ENCODE measurements at regions of chr17 and their contacts with region 1.

Region 1: DNA sequence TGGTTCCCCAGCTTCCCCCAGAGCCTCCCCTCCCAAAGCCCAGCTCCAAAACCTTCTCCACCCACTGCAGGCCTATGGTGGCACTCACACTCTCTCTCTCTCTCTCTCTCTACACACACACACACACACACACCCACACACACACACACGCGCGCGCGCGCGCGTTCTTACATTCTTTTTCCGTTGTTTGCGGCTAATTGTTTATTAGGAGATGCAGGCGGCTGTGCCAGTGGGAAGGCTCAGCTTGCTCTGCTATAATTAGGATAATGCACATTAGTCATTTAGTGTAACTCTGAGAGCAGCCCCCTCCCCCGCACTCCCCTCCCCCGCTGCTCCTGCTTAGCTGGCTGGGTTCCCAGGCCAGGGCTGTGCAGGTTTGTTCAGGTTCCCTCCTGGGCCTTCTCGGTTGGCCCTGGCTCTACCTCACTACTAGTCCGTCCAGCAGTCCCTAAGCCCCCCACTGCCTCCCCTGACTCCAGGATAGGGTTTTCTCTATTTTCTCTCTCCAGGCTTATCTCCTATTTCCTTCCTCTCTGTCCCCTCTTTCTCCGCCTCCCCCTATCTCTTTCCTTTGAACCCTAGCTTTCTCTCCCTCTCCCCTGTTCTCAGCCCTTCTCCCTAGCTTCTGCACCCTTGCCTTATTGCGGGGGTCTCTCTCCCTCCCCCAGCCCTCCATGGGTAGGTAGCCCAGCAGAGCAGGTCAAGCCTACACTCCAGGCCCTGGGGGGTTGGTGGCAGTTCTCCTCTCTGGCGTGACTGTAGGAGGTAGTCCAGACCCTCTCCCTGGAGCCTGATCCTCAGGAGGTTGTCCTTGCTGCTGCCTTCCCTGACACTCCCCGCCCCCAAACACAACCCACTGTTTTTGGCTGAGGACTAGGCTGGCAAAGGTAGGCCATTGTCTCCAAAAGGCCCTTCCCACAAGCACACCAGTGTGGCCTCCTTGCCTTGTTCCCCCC is 34.0 kb downstream of the TMEM132E start:
- DNase-seq: no peak
- ATAC-seq: no peak
- H3K4me3 ChIP-seq: no peak overlapping the region
- H3K27ac ChIP-seq: no peak overlapping the region
- H3K4me1 ChIP-seq: no peaks in the 10 kb centered on the region
- H3K27me3 ChIP-seq: peaks cover 0 to 42% (median 9%) of the 10 kb centered on the region in 3 donors
- CTCF ChIP-seq: no peak
- POLR2A ChIP-seq: no peak

Region 2: DNA sequence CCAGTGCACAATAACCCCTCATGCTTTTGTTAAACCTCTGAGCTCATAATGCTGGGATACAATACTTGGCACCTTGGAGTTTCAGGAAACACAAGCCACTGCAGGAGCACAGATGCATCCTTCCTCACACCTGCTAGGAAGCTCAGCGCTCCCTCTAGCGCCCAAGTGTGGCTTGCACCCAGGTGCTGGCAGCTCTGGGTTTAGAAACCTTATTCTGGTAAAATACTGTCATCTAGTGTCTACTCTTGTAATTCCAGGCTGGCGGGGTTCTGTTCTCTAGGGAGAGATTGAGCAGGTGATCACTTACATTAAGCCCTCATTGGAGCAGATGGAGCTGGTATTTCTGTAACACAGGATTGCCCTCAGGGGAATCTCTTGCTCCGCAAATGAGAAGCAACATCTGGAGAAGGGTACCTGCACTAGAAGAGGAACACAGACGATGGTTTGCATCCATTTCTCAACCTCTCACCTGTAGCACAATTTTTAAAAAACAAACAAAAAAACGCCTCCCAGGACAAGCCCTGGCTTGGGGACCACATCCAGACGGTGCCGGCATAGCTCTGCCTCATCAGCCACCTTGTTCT is 251.8 kb before region 1 on chr17:
- in situ Hi-C with region 1: no loop called
- intact Hi-C with region 1: no loop called
- DNase-seq: peak; percentile 57 to 73
- ATAC-seq: peak; percentile 87 to 91
- H3K4me3 ChIP-seq: no peak overlapping the region
- H3K27ac ChIP-seq: no peak overlapping the region
- H3K4me1 ChIP-seq: no peaks in the 10 kb centered on the region
- H3K27me3 ChIP-seq: no peaks in the 10 kb centered on the region
- CTCF ChIP-seq: peak; percentile 83 to 96 (median 92)
- POLR2A ChIP-seq: no peak

Region 3: GRCh38 chr17:34443619-34444469 is 169.5 kb before region 1 on chr17:
- in situ Hi-C with region 1: loop called in 1 of 4 experiments (anchors 25 kb)
- intact Hi-C with region 1: no loop called
- DNase-seq: no peak
- ATAC-seq: no peak
- H3K4me3 ChIP-seq: no peak overlapping the region
- H3K27ac ChIP-seq: no peak overlapping the region
- H3K4me1 ChIP-seq: peaks cover 0 to 2% of the 10 kb centered on the region in 2 donors
- H3K27me3 ChIP-seq: no peaks in the 10 kb centered on the region
- CTCF ChIP-seq: no peak
- POLR2A ChIP-seq: no peak

Region 4: DNA sequence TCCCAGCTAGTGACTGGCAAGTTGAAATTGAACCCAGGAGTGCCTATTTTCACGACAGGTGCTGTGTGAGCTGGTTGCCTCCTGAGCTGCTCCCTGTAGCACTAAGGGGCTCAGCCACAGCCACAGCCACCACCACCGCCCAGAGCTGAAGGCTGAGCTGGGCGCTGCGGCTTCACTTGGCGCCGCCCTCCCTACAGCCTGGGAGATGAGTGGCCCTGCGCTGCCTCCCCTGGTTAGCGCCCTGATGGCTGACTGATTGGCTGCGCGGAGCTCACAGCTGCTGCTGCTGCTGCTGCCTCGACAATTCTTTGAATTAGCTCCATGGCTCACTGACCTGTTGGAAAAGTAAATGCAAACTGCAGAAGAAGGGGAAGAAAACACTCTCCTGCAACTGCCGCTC is 125.7 kb before region 1 on chr17:
- in situ Hi-C with region 1: no loop called
- intact Hi-C with region 1: no loop called
- DNase-seq: no peak
- ATAC-seq: no peak
- H3K4me3 ChIP-seq: no peak overlapping the region
- H3K27ac ChIP-seq: no peak overlapping the region
- H3K4me1 ChIP-seq: no peaks in the 10 kb centered on the region
- H3K27me3 ChIP-seq: peaks cover 0 to 8% (median 3%) of the 10 kb centered on the region in 3 donors
- CTCF ChIP-seq: no peak
- POLR2A ChIP-seq: no peak